ENCODE measurements at regions of chr1 and their contacts with region 1.

Region 1: DNA sequence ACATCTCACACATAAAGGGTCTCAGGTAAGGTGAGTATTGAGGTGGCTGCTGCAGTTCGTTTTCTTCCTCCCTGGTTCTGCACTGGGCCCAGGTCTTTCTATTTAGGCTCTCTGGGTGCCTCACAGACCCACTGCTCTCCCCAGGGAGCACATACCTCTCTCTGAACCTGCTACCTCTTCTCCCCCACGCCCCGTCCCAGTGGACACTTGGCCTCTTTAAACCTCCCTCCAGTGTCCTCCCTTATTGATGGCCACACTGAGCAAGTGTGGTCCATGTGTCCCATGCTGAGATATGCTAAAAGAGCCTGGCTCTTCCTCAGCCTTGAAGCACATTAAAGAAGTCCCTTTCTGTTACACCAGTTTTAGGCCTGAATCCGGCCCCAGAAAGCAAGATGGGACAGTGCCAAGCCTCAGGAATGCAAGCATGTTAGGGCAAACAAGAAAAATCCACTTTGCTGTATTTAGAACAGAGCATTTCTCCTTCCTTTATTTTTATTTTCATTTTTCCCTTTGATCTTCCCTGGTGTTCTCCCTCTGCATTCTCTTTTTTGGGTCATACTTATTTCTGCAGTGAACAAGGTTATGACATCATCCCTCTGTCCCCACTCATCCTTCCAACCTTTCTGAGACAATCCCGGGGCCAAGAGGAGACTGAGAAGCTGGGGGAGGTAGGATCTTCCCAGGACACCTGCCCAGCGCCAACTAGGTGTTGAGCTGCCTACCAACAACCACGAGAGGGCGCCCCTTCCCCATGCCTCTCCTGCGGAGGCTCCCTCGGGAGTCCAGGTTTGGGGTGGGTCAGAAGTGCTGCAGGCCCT is 5.0 kb upstream of the CHI3L2 start:
- DNase-seq: peak; percentile 87
- H3K4me3 Mint-ChIP-seq: peak overlapping the region; percentile 71
- H3K27ac Mint-ChIP-seq: peak overlapping the region; percentile 98
- H3K4me1 Mint-ChIP-seq: peaks cover 96% of the 10 kb centered on the region
- H3K27me3 Mint-ChIP-seq: no peaks in the 10 kb centered on the region

Region 2: DNA sequence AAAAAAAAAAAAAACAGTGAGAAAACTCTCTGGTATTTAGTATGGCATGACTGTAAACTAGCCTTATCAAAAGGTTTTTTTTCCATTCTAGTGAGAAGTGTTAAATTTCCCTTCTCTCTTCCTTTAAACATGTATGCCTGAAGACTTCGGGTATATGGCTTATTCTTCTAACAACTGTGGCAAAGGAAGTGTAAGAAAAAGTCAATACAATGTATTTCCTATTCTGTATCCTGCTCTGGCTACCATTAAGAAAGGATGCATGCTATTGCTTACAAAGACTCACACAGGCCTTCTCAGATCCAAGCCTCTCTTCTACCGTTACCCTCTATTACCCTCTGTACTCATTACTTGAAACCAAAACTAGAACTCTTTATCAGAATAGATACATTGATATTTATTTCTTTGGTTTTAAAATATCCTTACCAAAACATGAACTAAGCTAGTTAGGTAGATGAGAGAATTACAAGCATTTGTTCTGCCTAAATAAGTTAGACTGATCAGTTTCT is 74.1 kb before region 1 on chr1:
- CTCF ChIA-PET with region 1: no interaction called
- DNase-seq: no peak
- H3K4me3 Mint-ChIP-seq: no peak overlapping the region
- H3K27ac Mint-ChIP-seq: no peak overlapping the region
- H3K4me1 Mint-ChIP-seq: peaks cover 58% of the 10 kb centered on the region
- H3K27me3 Mint-ChIP-seq: no peaks in the 10 kb centered on the region

Region 3: DNA sequence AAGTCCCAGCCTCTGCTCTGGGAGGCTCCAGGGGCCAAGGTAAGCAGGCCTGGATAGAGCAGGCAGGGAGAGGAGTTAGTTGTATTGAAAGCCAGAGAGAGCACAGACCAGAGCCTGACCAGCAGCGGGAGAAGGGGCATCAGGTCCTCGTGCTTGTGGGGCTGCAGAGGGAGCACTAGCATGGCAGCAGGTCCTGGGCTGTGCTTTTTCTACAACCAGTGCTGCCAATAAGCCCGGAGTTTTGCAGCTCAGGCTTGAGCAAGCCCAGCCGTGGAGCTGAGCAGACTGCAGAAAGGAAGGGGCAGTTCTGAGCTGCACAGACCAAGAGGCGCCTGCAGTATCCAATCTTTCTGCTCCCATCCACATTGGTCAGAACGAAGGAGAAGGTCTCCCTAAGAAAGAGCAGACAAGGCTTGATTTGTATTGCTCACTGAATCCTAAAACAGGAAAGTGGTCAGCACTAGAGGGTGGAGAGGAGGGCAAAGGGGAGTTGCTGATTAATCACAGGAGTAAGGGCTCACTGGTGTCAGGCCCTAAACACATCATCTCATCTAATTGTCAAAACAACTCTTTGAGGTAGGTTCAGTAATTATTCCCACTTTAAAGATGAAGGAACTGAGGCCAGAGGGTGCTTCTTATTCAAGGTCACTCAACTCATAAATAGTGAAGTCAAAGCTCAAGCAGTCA is 24.8 kb before region 1 on chr1:
- CTCF ChIA-PET with region 1: interaction called, 250 read pairs
- DNase-seq: peak; percentile 79
- H3K4me3 Mint-ChIP-seq: peak overlapping the region; percentile 99
- H3K27ac Mint-ChIP-seq: peak overlapping the region; percentile 97
- H3K4me1 Mint-ChIP-seq: peaks cover 76% of the 10 kb centered on the region
- H3K27me3 Mint-ChIP-seq: no peaks in the 10 kb centered on the region

Region 4: GRCh38 chr1:111334169-111334568 is 111.7 kb after region 1 on chr1:
- CTCF ChIA-PET with region 1: interaction called, 96 read pairs
- DNase-seq: peak; percentile 72
- H3K4me3 Mint-ChIP-seq: no peak overlapping the region
- H3K27ac Mint-ChIP-seq: no peak overlapping the region
- H3K4me1 Mint-ChIP-seq: peaks cover 3% of the 10 kb centered on the region
- H3K27me3 Mint-ChIP-seq: peaks cover 5% of the 10 kb centered on the region

Region 5: GRCh38 chr1:111441573-111442192 is 219.2 kb after region 1 on chr1:
- CTCF ChIA-PET with region 1: interaction called, 16 read pairs
- DNase-seq: peak; percentile 80
- H3K4me3 Mint-ChIP-seq: no peak overlapping the region
- H3K27ac Mint-ChIP-seq: peak overlapping the region; percentile 38
- H3K4me1 Mint-ChIP-seq: peaks cover 43% of the 10 kb centered on the region
- H3K27me3 Mint-ChIP-seq: no peaks in the 10 kb centered on the region

Region 6: GRCh38 chr1:111565079-111565478 is 342.6 kb after region 1 on chr1:
- CTCF ChIA-PET with region 1: no interaction called
- DNase-seq: no peak
- H3K4me3 Mint-ChIP-seq: no peak overlapping the region
- H3K27ac Mint-ChIP-seq: no peak overlapping the region
- H3K4me1 Mint-ChIP-seq: no peaks in the 10 kb centered on the region
- H3K27me3 Mint-ChIP-seq: peaks cover 4% of the 10 kb centered on the region